ENCODE measurements at regions of chr7 and their contacts with region 1.

Region 1: DNA sequence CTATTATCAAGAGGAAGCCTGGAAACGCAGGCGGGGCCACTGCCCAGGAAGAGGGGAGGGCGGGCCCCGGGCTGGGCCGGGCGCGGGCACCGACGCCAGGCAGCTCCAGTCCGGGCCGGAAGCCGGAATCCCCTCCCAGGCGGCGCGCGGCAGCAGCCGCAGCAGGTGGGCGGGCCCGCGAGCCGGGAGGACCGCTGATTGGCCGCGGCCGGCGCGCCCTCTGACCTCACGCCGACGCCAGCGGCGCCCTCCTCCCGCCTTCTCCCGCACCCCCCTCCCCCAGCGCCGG is 438 bp downstream of the BCL7B start:
- DNase-seq: peak; percentile 93
- ATAC-seq: peak; percentile 92
- H3K4me3 Mint-ChIP-seq: peak overlapping the region; percentile 88
- H3K27ac Mint-ChIP-seq: peak overlapping the region; percentile 93
- H3K4me1 Mint-ChIP-seq: peaks cover 40% of the 10 kb centered on the region
- H3K27me3 Mint-ChIP-seq: no peaks in the 10 kb centered on the region
- CTCF ChIP-seq: no peak

Region 2: GRCh38 chr7:73522105-73522872 is 34.8 kb before region 1 on chr7 and contains the start of gene BAZ1B:
- CTCF ChIA-PET with region 1: interaction called, 4 read pairs
- POLR2A ChIA-PET with region 1: interaction called, 31 read pairs
- intact Hi-C with region 1: loop called (anchors 2 kb)
- DNase-seq: peak; percentile 98
- ATAC-seq: peak; percentile 93
- H3K4me3 Mint-ChIP-seq: peak within 1 kb of the TSS; percentile 90
- H3K27ac Mint-ChIP-seq: peak within 1 kb of the TSS; percentile 95
- H3K4me1 Mint-ChIP-seq: peaks cover 52% of the 10 kb centered on the region
- H3K27me3 Mint-ChIP-seq: no peaks in the 10 kb centered on the region
- CTCF ChIP-seq: no peak
- total RNA-seq, gene BAZ1B: 82.4 to 82.6 TPM

Measured in activated CD8-positive, alpha-beta T cell treated with anti-CD3 and anti-CD28 coated beads for 36 hours (primary cell).